ENCODE measurements at regions of chr17 and their contacts with region 1.

Region 1: GRCh38 chr17:63946440-63947367 is 14.6 kb upstream of the CD79B start:
- DNase-seq: peak; percentile 91
- H3K4me3 ChIP-seq: no peak overlapping the region
- H3K27ac ChIP-seq: no peak overlapping the region
- H3K4me1 ChIP-seq: no peaks in the 10 kb centered on the region
- H3K27me3 ChIP-seq: no peaks in the 10 kb centered on the region; the same call in 1 of the 2 replicates
- CTCF ChIP-seq: peak; percentile 77
- EP300 ChIP-seq: no peak
- RAD21 ChIP-seq: peak; percentile 50

Region 2: DNA sequence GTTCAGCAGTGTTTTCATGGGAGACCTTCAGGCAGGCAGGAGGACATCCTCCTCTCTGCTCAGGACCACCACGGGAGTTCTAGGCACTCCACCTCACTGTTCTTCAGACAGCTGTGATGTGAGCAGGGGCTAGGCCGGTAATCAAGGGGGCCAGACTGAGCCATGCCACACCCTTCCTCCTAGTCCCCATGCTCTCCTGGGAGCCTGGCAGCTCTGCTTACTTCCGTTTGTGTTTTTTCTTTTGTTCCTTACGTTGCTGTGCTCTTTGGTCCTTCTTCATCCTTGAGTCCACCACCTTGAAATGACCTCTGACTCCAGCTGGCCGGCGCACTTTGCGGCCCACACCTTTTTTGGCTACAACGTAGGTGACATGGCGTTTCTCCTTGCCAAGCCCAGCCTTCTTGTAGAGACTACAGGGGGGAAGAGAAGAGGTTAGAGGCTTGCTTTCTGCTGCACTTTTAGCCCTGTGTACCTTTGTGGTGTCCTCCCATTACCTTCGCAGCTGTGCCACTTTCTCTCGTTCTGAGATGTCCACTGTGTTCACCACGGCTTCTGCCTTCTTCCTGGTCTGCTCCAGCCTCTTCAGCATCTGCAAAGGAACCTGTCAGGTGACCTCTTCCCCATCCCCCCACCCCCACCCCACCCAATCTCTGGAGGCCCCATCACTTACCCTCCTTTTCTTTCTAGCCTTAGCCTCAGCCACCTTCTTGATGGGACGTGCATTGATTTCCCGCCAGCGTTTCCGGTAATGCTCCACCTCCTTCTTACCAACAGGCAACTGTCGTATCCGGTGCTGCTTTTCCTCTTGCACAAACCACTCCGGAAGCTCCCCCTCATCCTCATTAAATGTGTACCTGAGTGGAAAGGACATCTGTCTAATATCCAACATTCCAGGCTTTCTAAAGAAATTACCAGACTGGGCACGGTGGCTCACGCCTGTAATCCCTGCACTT is 126.8 kb before region 1 on chr17:
- CTCF ChIA-PET with region 1: no interaction called
- POLR2A ChIA-PET with region 1: no interaction called
- DNase-seq: no peak
- H3K4me3 ChIP-seq: no peak overlapping the region
- H3K27ac ChIP-seq: no peak overlapping the region
- H3K4me1 ChIP-seq: peaks cover 0 to 5% of the 10 kb centered on the region in 2 experiments; a peak in 1 of 4 replicates
- H3K27me3 ChIP-seq: no peaks in the 10 kb centered on the region
- CTCF ChIP-seq: no peak
- EP300 ChIP-seq: no peak
- RAD21 ChIP-seq: no peak

Region 3: DNA sequence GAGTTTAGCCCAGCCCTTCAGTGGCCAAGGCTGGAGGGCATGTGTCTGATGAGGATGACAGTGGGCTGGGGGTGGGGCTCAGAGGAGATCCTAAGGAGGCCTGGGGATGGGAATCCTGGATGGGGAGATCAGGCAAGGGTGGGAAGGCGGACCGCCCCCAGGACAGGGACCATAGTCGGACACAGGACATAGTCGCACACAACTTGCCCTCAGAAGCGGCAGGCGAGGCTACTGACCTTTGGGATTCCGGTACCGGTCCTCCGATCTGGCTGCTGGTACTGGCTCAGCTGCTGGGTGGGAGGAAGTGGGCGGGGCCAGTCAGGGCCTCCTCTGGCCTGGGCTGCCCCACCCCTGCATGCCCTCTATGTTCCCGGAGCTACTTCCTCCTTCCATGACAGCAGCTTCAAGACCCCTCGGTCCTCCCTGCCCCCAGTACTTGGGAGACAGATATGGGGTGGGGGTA is 15.6 kb before region 1 on chr17:
- CTCF ChIA-PET with region 1: interaction called, 39 read pairs
- POLR2A ChIA-PET with region 1: no interaction called
- DNase-seq: peak; percentile 50
- H3K4me3 ChIP-seq: no peak overlapping the region
- H3K27ac ChIP-seq: no peak overlapping the region
- H3K4me1 ChIP-seq: no peaks in the 10 kb centered on the region
- H3K27me3 ChIP-seq: peaks cover 13% of the 10 kb centered on the region; the same call in 1 of the 2 replicates
- CTCF ChIP-seq: no peak
- EP300 ChIP-seq: no peak
- RAD21 ChIP-seq: no peak

Region 4: DNA sequence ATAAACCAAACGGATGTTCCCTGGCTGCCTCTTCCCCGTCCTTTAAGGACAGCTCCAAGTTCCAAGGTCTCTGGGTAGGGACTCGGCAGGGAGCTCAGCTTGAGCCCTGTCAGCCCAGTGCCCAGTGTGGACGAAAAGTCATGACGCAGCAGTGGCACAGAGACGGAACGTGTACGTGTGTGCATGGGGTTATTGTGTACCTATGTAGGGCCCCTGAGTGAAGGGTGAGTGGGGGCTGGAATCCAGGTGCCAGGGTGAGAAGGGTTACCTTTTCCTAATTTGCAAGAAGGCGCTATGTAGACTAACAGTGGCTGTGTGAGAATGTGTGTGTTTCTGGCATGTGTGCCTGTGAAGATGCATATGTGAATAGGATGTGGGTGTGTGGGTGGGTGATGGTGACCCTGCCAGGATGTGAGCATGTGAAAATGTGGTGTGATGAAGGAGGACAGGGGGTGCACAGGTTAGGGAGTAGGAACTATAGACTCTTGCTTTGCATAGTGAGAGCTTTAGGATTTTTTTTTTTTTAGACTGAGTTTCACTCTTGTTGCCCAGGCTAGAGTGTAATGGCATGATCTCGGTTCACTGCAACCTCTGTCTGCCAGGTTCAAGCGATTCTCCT is 20.1 kb after region 1 on chr17:
- CTCF ChIA-PET with region 1: interaction called, 69 read pairs
- POLR2A ChIA-PET with region 1: no interaction called
- DNase-seq: no peak
- H3K4me3 ChIP-seq: no peak overlapping the region
- H3K27ac ChIP-seq: no peak overlapping the region
- H3K4me1 ChIP-seq: no peaks in the 10 kb centered on the region
- H3K27me3 ChIP-seq: no peaks in the 10 kb centered on the region
- CTCF ChIP-seq: no peak
- EP300 ChIP-seq: no peak
- RAD21 ChIP-seq: no peak

Region 5: GRCh38 chr17:63984651-63985386 is 38.1 kb after region 1 on chr17:
- CTCF ChIA-PET with region 1: interaction called, 16 read pairs
- POLR2A ChIA-PET with region 1: no interaction called
- DNase-seq: no peak
- H3K4me3 ChIP-seq: no peak overlapping the region
- H3K27ac ChIP-seq: no peak overlapping the region
- H3K4me1 ChIP-seq: peaks cover 0 to 4% of the 10 kb centered on the region in 2 experiments; a peak in 1 of 4 replicates
- H3K27me3 ChIP-seq: no peaks in the 10 kb centered on the region
- CTCF ChIP-seq: no peak
- EP300 ChIP-seq: no peak
- RAD21 ChIP-seq: no peak

Region 6: GRCh38 chr17:64020056-64020766 is 73.5 kb after region 1 on chr17 and contains the start of gene ICAM2:
- CTCF ChIA-PET with region 1: interaction called, 16 read pairs
- POLR2A ChIA-PET with region 1: no interaction called
- DNase-seq: no peak
- H3K4me3 ChIP-seq: no peak within 1 kb of the TSS
- H3K27ac ChIP-seq: no peak within 1 kb of the TSS
- H3K4me1 ChIP-seq: no peaks in the 10 kb centered on the region
- H3K27me3 ChIP-seq: no peaks in the 10 kb centered on the region
- CTCF ChIP-seq: no peak
- EP300 ChIP-seq: no peak
- RAD21 ChIP-seq: no peak
- polyA plus RNA-seq, gene ICAM2: 0.08 TPM in 1 of 2 replicates, not detected in the other